ENCODE measurements at regions of chr7 and their contacts with region 1.

Region 1: DNA sequence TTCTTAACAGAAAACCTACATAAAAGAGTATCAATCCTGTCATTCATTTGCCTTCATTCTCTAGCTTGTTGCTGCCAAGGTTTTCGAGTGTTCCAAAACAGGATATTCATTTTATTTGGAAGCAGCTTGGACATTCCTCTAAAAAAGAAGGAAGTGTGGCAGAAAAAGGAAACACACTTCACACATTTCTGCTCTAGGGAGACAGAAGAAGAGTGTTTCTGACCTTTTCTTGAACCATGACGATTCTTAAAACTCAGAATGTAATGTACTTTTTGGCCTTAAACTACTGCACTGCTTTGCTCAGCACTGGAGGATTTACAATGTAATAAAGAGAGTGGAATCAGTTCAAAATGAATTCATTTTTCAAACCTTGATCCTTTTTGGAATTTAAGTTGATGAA is 81.3 kb downstream of the SEMA3A start:
- DNase-seq: no peak
- H3K4me3 ChIP-seq: no peak overlapping the region
- H3K4me3 Mint-ChIP-seq: no peak overlapping the region
- H3K27ac Mint-ChIP-seq: no peak overlapping the region
- H3K4me1 ChIP-seq: peaks cover 22% of the 10 kb centered on the region
- H3K4me1 Mint-ChIP-seq: no peaks in the 10 kb centered on the region
- H3K27me3 ChIP-seq: no peaks in the 10 kb centered on the region
- H3K27me3 Mint-ChIP-seq: no peaks in the 10 kb centered on the region
- CTCF ChIP-seq: no peak

Region 2: DNA sequence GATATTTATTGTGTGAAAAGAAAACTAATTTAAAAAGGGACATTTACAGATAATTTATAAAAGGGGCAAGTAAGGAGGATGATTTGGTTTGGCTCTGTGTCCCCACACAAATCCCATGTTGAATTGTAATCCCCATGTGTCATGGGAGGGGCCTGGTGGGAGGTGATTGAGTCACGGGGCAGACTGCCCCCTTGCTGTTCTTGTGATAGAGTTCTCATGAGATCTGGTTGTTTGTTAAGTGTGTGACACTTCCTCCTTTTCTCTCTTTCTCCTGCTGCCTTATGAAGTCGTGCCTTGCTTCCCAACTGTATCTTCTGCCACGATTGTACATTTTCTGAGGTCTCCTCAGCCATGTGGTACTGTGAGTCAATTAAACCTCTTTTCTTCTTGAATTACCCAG is 293.4 kb before region 1 on chr7:
- CTCF ChIA-PET with region 1: no interaction called
- POLR2A ChIA-PET with region 1: no interaction called
- intact Hi-C with region 1: no loop called
- DNase-seq: no peak
- H3K4me3 ChIP-seq: no peak overlapping the region
- H3K4me3 Mint-ChIP-seq: no peak overlapping the region
- H3K27ac Mint-ChIP-seq: no peak overlapping the region
- H3K4me1 ChIP-seq: no peaks in the 10 kb centered on the region
- H3K4me1 Mint-ChIP-seq: no peaks in the 10 kb centered on the region
- H3K27me3 ChIP-seq: no peaks in the 10 kb centered on the region
- H3K27me3 Mint-ChIP-seq: peaks cover 3% of the 10 kb centered on the region
- CTCF ChIP-seq: no peak

Region 3: DNA sequence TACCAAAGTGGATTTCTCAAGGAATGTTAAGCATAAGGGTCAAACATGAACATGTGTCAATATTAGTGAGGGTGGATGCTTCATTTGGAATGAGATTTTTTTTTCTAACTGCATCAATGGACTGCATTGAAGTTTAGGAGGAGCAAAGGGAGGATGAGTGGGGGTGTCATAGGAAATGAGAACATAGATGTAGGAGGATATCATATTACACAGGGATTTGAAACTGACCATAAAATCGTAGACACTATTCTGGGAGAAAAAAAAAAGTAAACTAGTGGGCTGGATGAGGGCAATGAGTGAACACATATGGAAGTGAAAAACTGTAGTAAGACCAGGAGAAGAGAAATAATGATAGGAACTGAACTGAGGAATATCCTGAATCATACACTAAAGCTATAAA is 28.1 kb before region 1 on chr7:
- CTCF ChIA-PET with region 1: no interaction called
- POLR2A ChIA-PET with region 1: no interaction called
- intact Hi-C with region 1: no loop called
- DNase-seq: no peak
- H3K4me3 ChIP-seq: no peak overlapping the region
- H3K4me3 Mint-ChIP-seq: no peak overlapping the region
- H3K27ac Mint-ChIP-seq: peak overlapping the region; percentile 46
- H3K4me1 ChIP-seq: peaks cover 53% of the 10 kb centered on the region
- H3K4me1 Mint-ChIP-seq: peaks cover 30% of the 10 kb centered on the region
- H3K27me3 ChIP-seq: no peaks in the 10 kb centered on the region
- H3K27me3 Mint-ChIP-seq: no peaks in the 10 kb centered on the region
- CTCF ChIP-seq: no peak

Region 4: GRCh38 chr7:84142726-84143125 is 29.4 kb after region 1 on chr7:
- CTCF ChIA-PET with region 1: no interaction called
- POLR2A ChIA-PET with region 1: no interaction called
- intact Hi-C with region 1: loop called (anchors 1 kb)
- DNase-seq: no peak
- H3K4me3 ChIP-seq: no peak overlapping the region
- H3K4me3 Mint-ChIP-seq: peak overlapping the region; percentile 20
- H3K27ac Mint-ChIP-seq: peak overlapping the region; percentile 34
- H3K4me1 ChIP-seq: peaks cover 62% of the 10 kb centered on the region
- H3K4me1 Mint-ChIP-seq: peaks cover 50% of the 10 kb centered on the region
- H3K27me3 ChIP-seq: no peaks in the 10 kb centered on the region
- H3K27me3 Mint-ChIP-seq: no peaks in the 10 kb centered on the region
- CTCF ChIP-seq: no peak

Measured in Caco-2 (cell line).